Panc1 (cell line): ENCODE measurements at regions of chr3 and their contacts with region 1.

Region 1: GRCh38 chr3:190217081-190217480 is 96.4 kb upstream of the P3H2 start:
- DNase-seq: no peak
- ATAC-seq: no peak
- H3K4me3 ChIP-seq: no peak overlapping the region
- H3K27ac ChIP-seq: no peak overlapping the region
- H3K4me1 ChIP-seq: no peaks in the 10 kb centered on the region
- H3K27me3 ChIP-seq: no peaks in the 10 kb centered on the region
- CTCF ChIP-seq: no peak

Region 2: DNA sequence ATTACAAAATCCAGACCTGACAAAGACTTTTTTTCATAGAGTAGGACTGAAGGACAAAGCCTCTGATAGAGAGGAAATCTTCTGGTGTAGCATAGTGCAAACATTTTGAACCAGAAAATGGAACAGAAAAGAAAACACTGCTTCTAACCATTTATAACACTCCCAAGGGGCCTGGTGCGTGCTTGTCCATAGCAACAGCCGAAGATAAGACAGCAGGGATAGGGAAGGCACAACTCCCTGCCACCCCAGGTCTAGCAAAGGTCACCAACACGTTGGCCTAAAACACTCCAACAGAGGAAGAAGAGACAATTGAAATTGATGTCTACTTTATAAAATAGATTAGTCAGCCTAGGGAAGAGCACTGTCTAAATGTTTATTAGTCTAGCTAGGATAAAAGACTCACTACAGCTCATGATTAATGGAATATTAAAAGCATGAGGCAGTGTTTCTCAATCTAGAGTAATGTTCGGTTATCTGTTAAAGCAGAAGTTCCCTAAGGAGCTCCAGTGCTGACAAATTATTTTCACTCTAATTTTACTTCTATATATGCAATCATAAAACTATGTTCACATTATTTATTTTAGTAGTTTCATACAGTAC is 241.6 kb before region 1 on chr3:
- CTCF ChIA-PET with region 1: no interaction called
- POLR2A ChIA-PET with region 1: no interaction called
- in situ Hi-C with region 1: loop called (anchors 10 kb)
- intact Hi-C with region 1: no loop called
- DNase-seq: no peak
- ATAC-seq: no peak
- H3K4me3 ChIP-seq: no peak overlapping the region
- H3K27ac ChIP-seq: no peak overlapping the region
- H3K4me1 ChIP-seq: no peaks in the 10 kb centered on the region
- H3K27me3 ChIP-seq: no peaks in the 10 kb centered on the region
- CTCF ChIP-seq: no peak

Region 3: GRCh38 chr3:190155752-190156151 is 61.3 kb before region 1 on chr3:
- CTCF ChIA-PET with region 1: no interaction called
- POLR2A ChIA-PET with region 1: no interaction called
- in situ Hi-C with region 1: no loop called
- intact Hi-C with region 1: no loop called
- DNase-seq: no peak
- ATAC-seq: no peak
- H3K4me3 ChIP-seq: no peak overlapping the region
- H3K27ac ChIP-seq: no peak overlapping the region
- H3K4me1 ChIP-seq: no peaks in the 10 kb centered on the region
- H3K27me3 ChIP-seq: no peaks in the 10 kb centered on the region
- CTCF ChIP-seq: no peak

Region 4: DNA sequence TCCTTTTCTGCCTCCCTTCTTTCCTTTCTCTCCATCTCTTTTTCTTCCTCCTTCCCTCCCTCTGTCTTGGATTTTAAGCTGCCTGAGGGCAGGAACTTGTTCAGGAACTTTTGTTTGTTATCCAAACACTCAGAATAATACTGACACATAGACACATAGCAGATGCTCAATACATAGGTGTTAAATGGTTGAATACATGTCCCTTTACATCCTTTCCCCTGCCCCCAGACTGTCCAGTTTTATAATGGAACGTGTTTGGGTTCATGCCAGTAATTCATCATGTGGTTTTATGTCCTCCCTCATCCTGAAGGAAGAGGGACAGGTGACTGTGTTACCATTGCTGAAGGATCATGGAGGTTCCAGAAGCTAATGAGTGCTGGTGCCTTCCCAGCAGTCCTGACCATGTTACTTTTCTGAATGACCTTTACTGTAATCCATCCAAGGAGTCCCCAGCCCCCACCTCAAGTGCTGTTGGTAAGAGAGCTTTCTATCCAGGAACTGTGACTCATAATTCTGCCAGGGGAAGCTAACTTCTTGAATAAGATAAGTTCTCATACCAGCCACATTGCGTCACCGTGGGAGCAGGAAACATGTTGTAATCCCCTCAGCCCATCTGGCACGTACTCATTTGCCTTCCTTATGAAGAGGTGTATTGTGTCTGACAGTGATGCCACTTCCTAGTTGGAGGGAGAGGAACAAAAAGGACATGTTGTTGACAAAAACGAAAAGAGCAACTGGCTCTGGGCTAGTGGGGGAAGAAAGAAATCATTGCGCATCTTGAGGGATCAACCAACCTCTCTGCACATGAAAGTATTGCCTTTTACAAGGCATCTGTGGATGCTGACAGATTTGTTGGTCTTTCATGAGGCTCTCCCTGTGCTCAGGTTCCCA is 349.2 kb after region 1 on chr3:
- CTCF ChIA-PET with region 1: no interaction called
- POLR2A ChIA-PET with region 1: no interaction called
- in situ Hi-C with region 1: no loop called
- intact Hi-C with region 1: no loop called
- DNase-seq: peak; percentile 64
- ATAC-seq: peak; percentile 89
- H3K4me3 ChIP-seq: no peak overlapping the region
- H3K27ac ChIP-seq: no peak overlapping the region
- H3K4me1 ChIP-seq: no peaks in the 10 kb centered on the region
- H3K27me3 ChIP-seq: no peaks in the 10 kb centered on the region
- CTCF ChIP-seq: no peak